ENCODE measurements at regions of chr17 and their contacts with region 1.

Region 1: DNA sequence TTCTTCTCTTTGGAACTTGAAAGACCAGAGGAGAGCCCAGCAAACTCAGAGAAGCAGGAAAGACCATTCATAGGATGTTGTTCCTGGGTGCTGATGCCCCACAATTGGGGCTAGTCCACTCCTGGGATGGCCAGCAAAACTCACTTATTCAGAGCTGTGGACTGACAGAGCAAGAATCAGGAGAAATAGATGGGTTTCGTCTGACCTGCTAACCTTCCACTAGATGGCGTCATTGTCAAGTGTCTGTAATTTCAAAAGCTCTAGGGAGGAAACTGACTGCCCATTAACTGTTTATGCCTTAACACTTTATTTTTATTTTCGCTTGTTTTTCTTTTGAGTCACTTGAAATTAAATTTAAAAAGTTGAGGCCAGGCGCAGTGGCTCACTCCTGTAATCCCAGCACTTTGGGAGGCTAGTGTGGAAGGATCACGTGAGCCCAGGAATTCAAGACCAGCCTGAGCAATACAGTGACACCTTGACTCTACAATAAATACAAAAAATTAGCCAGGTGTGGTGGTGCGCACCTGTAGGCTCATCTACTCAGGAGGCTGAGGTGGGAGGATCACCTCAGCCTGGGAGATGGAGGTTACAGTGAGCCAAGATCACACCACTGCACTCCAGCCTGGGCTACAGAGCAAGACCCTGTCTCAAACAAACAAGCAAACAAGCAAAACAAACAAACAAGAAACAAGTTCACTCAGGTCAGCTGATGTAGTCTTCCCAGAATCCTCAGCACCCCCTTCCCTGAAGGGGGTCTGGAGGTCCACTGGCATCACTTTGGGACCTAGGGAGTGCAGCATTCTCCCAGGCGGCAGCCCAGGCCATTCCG is 28.6 kb upstream of the MILR1 start:
- DNase-seq: peak in 5 of 9 experiments; percentile 27 to 85 (median 62)
- ATAC-seq: peak; percentile 88
- H3K4me3 ChIP-seq: no peak overlapping the region
- H3K4me3 Mint-ChIP-seq: no peak overlapping the region
- H3K27ac ChIP-seq: no peak overlapping the region
- H3K27ac Mint-ChIP-seq: no peak overlapping the region
- H3K4me1 ChIP-seq: peaks cover 4% of the 10 kb centered on the region
- H3K4me1 Mint-ChIP-seq: peaks cover 2% of the 10 kb centered on the region
- H3K27me3 ChIP-seq: no peaks in the 10 kb centered on the region
- H3K27me3 Mint-ChIP-seq: no peaks in the 10 kb centered on the region
- CTCF ChIP-seq: peak; percentile 80

Region 2: GRCh38 chr17:64172510-64172909 is 247.8 kb before region 1 on chr17:
- CTCF ChIA-PET with region 1: no interaction called
- POLR2A ChIA-PET with region 1: no interaction called
- intact Hi-C with region 1: no loop called
- DNase-seq: no peak
- ATAC-seq: no peak
- H3K4me3 ChIP-seq: no peak overlapping the region
- H3K4me3 Mint-ChIP-seq: no peak overlapping the region
- H3K27ac ChIP-seq: no peak overlapping the region
- H3K27ac Mint-ChIP-seq: no peak overlapping the region
- H3K4me1 ChIP-seq: no peaks in the 10 kb centered on the region
- H3K4me1 Mint-ChIP-seq: no peaks in the 10 kb centered on the region
- H3K27me3 ChIP-seq: no peaks in the 10 kb centered on the region
- H3K27me3 Mint-ChIP-seq: no peaks in the 10 kb centered on the region
- CTCF ChIP-seq: no peak

Region 3: DNA sequence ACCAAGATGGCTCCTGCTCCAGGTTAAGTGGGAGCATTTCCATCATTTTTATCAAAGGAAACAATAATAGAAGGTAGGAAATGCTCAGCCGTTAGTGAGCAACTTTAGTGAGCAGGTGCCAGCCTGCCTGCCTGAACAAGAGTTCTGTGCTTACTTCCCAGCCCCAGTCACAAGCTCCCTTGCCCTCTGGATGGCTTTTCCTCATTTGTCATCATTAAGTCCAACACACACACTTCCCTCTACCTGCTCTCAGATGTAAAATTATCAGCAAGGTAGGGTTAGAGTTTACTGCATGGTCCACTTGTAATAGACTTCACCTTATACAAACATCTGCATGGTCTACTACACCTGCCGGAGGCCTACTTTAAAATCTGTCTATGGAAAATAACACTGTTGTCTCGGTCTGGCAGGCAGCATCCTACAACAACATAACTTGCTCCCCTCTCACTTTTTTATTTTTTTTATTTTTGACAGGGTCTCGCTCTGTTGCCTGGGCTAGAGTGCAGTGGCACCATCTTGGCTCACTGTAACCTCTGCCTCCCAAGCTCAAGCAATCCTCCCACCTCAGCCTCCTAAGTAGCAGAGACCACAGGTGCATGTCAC is 170.0 kb before region 1 on chr17:
- CTCF ChIA-PET with region 1: no interaction called
- POLR2A ChIA-PET with region 1: no interaction called
- intact Hi-C with region 1: no loop called
- DNase-seq: no peak
- ATAC-seq: no peak
- H3K4me3 ChIP-seq: no peak overlapping the region
- H3K4me3 Mint-ChIP-seq: no peak overlapping the region
- H3K27ac ChIP-seq: no peak overlapping the region
- H3K27ac Mint-ChIP-seq: no peak overlapping the region
- H3K4me1 ChIP-seq: no peaks in the 10 kb centered on the region
- H3K4me1 Mint-ChIP-seq: peaks cover 7% of the 10 kb centered on the region
- H3K27me3 ChIP-seq: no peaks in the 10 kb centered on the region
- H3K27me3 Mint-ChIP-seq: no peaks in the 10 kb centered on the region
- CTCF ChIP-seq: no peak

Region 4: DNA sequence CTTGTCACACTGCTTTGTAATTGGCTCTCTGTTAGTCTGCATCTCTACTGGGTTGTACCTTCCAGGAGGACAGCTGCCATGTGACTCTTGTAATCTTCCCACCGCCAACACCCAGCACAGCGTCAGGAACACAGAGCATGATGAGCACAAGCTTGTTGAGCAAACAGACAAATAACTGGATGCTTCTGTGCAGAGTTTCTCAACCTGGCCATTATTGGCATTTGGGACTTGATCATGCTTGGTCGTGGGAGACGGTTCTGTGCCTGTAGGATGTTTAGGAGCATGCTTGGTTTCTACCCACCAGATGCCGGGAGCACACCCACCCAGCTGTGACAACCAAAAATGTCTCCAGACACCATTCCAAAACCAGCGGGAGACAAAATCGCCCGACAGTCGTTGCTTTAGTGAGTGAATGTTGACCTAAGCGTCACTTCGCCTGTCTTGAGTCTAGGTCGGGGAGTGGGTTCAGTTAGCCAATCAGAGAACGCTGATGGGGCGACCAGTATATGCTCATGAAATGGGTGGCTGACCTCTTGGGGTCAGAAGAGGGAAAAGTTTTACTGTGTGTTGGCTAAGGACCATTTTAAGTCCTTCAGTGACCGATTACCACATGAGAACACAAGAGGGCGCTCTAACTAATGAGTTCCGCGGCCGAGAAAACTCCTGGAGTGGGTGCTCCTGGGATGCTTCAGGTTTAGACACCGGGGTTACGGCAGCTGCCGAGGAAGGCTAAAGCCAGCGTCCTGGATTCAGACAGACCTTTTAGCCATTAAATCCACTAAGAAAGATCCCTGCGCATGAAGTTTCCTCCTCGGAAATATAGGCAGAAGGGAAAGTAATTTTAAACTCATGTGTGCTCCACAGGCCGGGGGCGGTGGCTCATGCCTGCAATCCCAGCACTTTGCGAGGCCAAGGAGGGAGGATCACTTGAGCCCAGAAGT is 99.5 kb before region 1 on chr17:
- CTCF ChIA-PET with region 1: interaction called, 271 read pairs
- POLR2A ChIA-PET with region 1: interaction called, 6 read pairs
- intact Hi-C with region 1: loop called (anchors 1 kb)
- DNase-seq: peak in 8 of 9 experiments; percentile 38 to 76 (median 59)
- ATAC-seq: peak; percentile 68
- H3K4me3 ChIP-seq: no peak overlapping the region
- H3K4me3 Mint-ChIP-seq: peak overlapping the region; percentile 39
- H3K27ac ChIP-seq: peak overlapping the region in 1 of 2 experiments; percentile 33
- H3K27ac Mint-ChIP-seq: peak overlapping the region; percentile 88
- H3K4me1 ChIP-seq: no peaks in the 10 kb centered on the region
- H3K4me1 Mint-ChIP-seq: peaks cover 38% of the 10 kb centered on the region
- H3K27me3 ChIP-seq: no peaks in the 10 kb centered on the region
- H3K27me3 Mint-ChIP-seq: no peaks in the 10 kb centered on the region
- CTCF ChIP-seq: peak; percentile 84

Region 5: DNA sequence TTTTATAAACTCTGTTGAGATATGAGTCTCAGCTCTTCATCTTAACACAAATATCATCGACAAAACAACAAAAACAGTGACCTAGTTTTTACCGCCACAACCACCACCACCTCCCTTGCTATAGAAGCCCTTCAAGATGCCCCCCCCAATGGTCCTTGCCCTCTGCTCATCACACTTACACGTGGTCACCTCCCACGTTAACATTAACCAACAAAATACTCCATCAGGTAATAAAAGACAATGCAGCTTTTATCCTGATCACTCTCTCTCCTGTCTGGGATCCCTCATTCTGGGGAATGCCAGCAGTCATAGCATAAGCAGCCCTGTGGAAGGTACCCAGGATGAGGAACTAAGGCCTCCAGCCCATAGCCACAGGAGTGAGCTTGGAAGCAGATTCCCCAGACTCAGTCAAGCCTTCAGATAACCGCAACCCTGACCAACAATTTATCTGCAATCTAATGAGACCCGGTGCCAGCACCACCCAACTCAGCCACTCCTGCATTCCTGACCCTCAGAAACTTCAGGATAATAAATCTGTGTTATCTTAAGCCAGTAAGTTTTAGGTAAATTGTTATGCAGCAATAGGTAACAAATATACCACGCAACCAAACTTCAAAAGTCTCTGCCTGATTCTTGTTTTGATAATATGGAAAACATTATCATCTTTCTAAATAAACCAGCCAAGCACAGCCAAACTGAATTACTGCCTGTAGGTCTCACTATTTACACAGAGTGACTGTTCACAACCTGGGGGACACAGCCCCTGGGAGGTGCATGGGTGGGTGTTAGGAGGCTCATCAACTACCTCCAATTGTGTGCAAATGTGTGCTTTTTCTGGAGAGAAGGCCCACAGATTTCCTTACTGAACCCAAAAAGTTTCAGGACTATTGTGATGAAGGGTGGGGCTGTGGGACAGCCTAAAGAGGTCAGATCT is 35.8 kb before region 1 on chr17:
- CTCF ChIA-PET with region 1: interaction called, 45 read pairs
- POLR2A ChIA-PET with region 1: no interaction called
- intact Hi-C with region 1: loop called (anchors 5 kb)
- DNase-seq: peak in 3 of 9 experiments; percentile 45 to 68 (median 56)
- ATAC-seq: peak; percentile 47
- H3K4me3 ChIP-seq: peak overlapping the region in 1 of 2 experiments; percentile 5
- H3K4me3 Mint-ChIP-seq: peak overlapping the region; percentile 55
- H3K27ac ChIP-seq: peak overlapping the region in 1 of 2 experiments; percentile 69
- H3K27ac Mint-ChIP-seq: peak overlapping the region; percentile 81
- H3K4me1 ChIP-seq: peaks cover 63% of the 10 kb centered on the region
- H3K4me1 Mint-ChIP-seq: peaks cover 75% of the 10 kb centered on the region
- H3K27me3 ChIP-seq: no peaks in the 10 kb centered on the region
- H3K27me3 Mint-ChIP-seq: no peaks in the 10 kb centered on the region
- CTCF ChIP-seq: no peak

Region 6: DNA sequence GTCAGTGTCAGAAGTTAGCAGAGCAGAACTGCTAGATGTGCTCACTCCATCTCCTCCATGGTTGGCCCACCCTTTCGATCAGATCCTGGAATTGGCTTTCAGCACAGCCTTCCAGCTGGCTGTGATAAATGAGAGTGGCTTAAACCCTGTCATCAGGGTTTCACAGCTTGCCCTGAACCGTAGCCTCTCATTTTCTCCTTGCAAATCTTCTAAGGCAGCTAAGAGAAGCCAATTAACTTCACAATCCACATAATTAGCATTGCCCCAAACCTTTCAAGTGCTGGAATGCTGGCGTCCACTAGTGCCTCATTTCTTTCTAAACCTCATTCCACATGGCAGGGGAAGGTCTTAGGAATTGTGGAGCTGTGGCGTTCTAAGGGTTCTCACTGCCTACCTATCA is 50.3 kb after region 1 on chr17:
- CTCF ChIA-PET with region 1: interaction called, 11 read pairs
- POLR2A ChIA-PET with region 1: no interaction called
- intact Hi-C with region 1: no loop called
- DNase-seq: no peak
- ATAC-seq: no peak
- H3K4me3 ChIP-seq: no peak overlapping the region
- H3K4me3 Mint-ChIP-seq: no peak overlapping the region
- H3K27ac ChIP-seq: no peak overlapping the region
- H3K27ac Mint-ChIP-seq: no peak overlapping the region
- H3K4me1 ChIP-seq: no peaks in the 10 kb centered on the region
- H3K4me1 Mint-ChIP-seq: no peaks in the 10 kb centered on the region
- H3K27me3 ChIP-seq: no peaks in the 10 kb centered on the region
- H3K27me3 Mint-ChIP-seq: no peaks in the 10 kb centered on the region
- CTCF ChIP-seq: no peak

Region 7: DNA sequence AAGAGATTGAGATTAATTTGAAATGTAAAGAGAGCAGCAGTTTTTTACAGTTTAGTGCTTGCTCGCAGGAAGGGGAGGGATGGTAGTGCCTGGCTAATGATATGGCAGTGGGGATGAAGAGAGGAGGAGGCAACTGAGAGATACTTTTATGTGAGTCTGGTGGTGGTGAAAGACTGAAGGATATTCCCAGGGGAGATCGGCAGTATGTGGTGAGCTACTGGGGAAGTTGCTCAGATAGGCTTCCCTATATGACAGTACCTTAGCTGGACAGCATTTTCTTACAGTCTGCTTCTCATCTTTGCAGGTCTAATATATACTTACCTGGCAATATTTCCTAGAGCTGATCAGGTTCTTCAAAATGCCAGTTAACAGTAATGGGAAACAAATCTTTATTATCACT is 95.1 kb after region 1 on chr17:
- CTCF ChIA-PET with region 1: interaction called, 10 read pairs
- POLR2A ChIA-PET with region 1: interaction called, 3 read pairs
- intact Hi-C with region 1: no loop called
- DNase-seq: no peak
- ATAC-seq: no peak
- H3K4me3 ChIP-seq: no peak overlapping the region
- H3K4me3 Mint-ChIP-seq: no peak overlapping the region
- H3K27ac ChIP-seq: no peak overlapping the region
- H3K27ac Mint-ChIP-seq: no peak overlapping the region
- H3K4me1 ChIP-seq: no peaks in the 10 kb centered on the region
- H3K4me1 Mint-ChIP-seq: peaks cover 42% of the 10 kb centered on the region
- H3K27me3 ChIP-seq: no peaks in the 10 kb centered on the region
- H3K27me3 Mint-ChIP-seq: no peaks in the 10 kb centered on the region
- CTCF ChIP-seq: no peak

Region 8: DNA sequence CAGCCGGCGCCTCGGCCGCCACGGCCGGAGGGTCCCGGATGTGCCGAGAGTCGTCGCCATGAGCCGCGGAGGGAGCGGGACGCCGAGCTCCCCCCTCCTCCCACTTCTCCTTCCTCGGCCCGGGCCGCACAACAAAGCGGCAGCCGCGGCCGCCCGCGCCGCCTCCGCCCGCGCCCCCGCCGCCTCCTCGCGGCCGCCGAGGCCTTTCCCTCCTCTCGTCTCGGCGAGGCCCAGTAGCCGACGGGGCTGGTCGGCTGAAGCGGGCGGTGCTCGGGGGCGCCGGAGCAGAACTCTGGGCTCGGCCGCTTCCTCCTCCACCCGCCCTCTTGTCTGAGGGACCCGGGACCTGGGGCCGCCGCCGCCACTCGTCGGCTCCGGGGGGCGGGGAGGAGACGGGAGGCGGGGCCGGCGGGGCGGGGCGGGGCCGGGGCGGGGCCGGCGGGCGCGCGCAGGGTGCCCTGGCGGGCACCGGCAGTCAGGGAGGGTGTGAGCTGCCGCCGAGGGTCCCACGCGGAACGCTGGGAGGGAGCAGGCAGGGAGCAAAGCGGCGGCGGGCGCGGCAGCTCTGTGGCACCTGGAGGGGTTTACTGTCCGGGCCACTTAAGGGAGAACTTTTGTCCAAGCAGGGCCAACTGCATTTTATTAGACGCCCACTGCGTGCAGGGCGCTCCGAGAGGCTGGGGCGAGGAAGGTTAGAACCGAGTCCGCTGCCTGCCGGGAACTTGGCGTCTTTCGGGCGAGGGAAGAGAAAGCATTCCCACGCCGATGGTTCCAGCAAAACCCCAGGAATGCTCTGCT is 241.8 kb after region 1 on chr17 and contains the start of gene SMURF2:
- CTCF ChIA-PET with region 1: no interaction called
- POLR2A ChIA-PET with region 1: no interaction called
- intact Hi-C with region 1: loop called in 1 of 2 experiments (anchors 5 kb)
- DNase-seq: peak; percentile 63 to 90 (median 80)
- ATAC-seq: peak; percentile 90
- H3K4me3 ChIP-seq: peak within 1 kb of the TSS; percentile 71 to 79
- H3K4me3 Mint-ChIP-seq: peak within 1 kb of the TSS; percentile 98
- H3K27ac ChIP-seq: peak within 1 kb of the TSS; percentile 56 to 63
- H3K27ac Mint-ChIP-seq: peak within 1 kb of the TSS; percentile 95
- H3K4me1 ChIP-seq: peaks cover 31% of the 10 kb centered on the region
- H3K4me1 Mint-ChIP-seq: peaks cover 44% of the 10 kb centered on the region
- H3K27me3 ChIP-seq: no peaks in the 10 kb centered on the region
- H3K27me3 Mint-ChIP-seq: no peaks in the 10 kb centered on the region
- CTCF ChIP-seq: no peak
- total RNA-seq, gene SMURF2: 27.3 to 28.1 TPM